GM13977 (cell line): ENCODE measurements at regions of chr11 and their contacts with region 1.

Region 1: DNA sequence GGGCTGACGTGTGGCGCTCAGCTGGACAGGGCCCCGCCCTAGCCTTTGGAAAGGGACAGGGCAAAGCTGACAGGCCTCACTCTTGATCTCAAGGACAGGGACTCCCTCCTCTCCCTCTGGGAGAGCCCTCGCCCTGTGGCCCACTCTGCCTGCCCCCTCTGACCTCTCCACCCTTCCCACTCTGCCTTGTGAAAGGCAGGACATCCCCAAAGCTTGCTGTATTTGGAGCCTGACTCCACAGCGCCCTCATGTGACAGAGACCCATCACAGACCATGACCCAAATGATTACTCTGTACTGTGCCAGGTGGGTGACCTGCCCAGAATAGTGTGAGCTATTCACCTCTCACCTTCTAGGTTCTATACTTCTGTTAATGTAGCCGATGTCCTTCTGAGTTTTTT is 18.8 kb downstream of the P2RY2 start:
- DNase-seq: peak; percentile 83
- CTCF ChIP-seq: peak; percentile 81

Region 2: GRCh38 chr11:73184953-73185671 is 51.7 kb before region 1 on chr11:
- in situ Hi-C with region 1: loop called (anchors 5 kb)
- DNase-seq: peak; percentile 68
- CTCF ChIP-seq: peak; percentile 96

Region 3: GRCh38 chr11:73307323-73308002 is 70.6 kb after region 1 on chr11:
- in situ Hi-C with region 1: no loop called
- DNase-seq: peak; percentile 97
- CTCF ChIP-seq: peak; percentile 81